PC-9 (cell line): ENCODE measurements at regions of chr7 and their contacts with region 1.

Region 1: DNA sequence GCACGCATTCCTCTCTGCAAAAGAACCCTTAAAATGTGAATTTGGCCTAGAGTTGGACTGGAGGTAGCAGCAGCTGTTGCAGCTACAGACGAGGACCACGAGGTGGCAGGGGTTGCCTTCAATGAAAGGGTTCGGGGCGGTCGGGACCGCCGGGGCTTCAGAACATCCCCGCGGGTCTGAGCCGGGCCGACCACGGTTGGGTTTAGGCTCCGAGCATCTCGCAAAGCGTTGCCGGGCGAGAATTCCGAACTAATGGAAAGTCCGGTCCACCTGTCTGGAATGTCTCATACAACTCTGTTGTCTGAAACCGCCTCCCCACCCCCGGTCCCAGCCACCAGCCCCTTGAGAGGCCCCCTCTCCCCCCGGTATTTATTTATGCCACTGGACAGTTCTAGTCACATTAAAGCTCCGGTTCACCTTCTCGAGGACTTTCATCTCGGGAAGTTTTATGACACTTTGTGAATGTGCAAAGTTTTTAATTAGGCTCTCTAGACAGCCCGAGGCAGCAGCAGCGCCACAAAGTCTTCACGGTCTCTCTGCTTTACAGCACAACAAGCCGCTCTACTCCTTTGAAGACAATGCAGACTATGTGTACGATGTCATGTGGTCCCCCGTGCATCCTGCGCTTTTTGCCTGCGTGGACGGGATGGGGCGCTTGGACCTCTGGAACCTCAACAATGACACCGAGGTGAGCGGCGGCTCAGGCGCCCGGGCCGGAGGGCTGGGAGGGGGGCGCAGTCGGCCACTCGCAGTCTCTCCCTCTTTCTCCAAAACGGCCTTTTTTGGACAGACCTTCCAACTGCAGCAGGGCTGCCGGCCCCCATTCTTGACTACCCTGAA is 246.2 kb downstream of the SLC25A13 start:
- DNase-seq: peak in 1 of 2 experiments; percentile 55
- H3K4me3 ChIP-seq: peak overlapping the region; percentile 73
- H3K27ac ChIP-seq: no peak overlapping the region
- H3K4me1 ChIP-seq: peaks cover 13% of the 10 kb centered on the region
- H3K27me3 ChIP-seq: no peaks in the 10 kb centered on the region
- CTCF ChIP-seq: peak; percentile 87

Region 2: DNA sequence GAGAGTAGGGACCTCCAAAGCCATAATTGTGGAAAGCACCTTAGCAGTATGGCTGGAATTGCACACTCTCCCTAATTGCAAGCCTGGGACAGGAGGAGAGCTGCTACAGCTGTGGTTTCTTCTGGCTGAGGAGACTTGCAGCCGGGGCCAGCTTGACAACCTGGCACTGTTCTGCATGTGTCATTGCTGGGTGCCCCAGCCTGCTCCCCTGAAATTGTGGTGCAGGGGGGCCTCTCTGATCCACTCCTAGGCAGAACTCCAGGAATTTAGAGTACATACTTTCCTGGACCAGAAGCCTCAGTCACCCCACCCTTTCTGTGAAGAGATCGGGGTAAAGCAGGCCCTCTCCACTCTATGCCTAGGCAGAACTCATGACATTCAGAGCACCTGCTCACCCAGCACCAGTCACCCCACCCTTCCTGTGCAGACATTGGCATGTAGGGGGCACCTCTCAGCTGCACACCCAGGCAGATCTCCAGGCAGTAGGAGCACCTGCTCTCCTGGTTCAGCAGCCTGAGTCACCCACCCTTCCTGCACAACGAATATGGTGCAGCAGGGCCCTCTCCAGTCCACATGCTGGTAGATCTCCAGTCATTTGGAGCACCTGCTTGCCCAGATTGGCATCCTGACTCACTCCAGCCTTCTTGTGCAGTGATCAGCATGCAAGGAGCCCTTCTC is 337.8 kb before region 1 on chr7:
- CTCF ChIA-PET with region 1: no interaction called
- POLR2A ChIA-PET with region 1: no interaction called
- intact Hi-C with region 1: no loop called
- DNase-seq: no peak
- H3K4me3 ChIP-seq: no peak overlapping the region
- H3K27ac ChIP-seq: no peak overlapping the region
- H3K4me1 ChIP-seq: no peaks in the 10 kb centered on the region
- H3K27me3 ChIP-seq: peaks cover 3% of the 10 kb centered on the region; the same call in 1 of the 2 replicates
- CTCF ChIP-seq: no peak

Region 3: GRCh38 chr7:95916573-95917297 is 159.0 kb before region 1 on chr7:
- CTCF ChIA-PET with region 1: interaction called, 11 read pairs
- POLR2A ChIA-PET with region 1: no interaction called
- intact Hi-C with region 1: no loop called
- DNase-seq: peak; percentile 43 to 76
- H3K4me3 ChIP-seq: no peak overlapping the region
- H3K27ac ChIP-seq: no peak overlapping the region
- H3K4me1 ChIP-seq: no peaks in the 10 kb centered on the region
- H3K27me3 ChIP-seq: no peaks in the 10 kb centered on the region; the same call in 1 of the 2 replicates
- CTCF ChIP-seq: peak; percentile 92

Region 4: GRCh38 chr7:96169439-96169838 is 93.7 kb after region 1 on chr7:
- CTCF ChIA-PET with region 1: no interaction called
- POLR2A ChIA-PET with region 1: no interaction called
- intact Hi-C with region 1: no loop called
- DNase-seq: no peak
- H3K4me3 ChIP-seq: no peak overlapping the region
- H3K27ac ChIP-seq: no peak overlapping the region
- H3K4me1 ChIP-seq: no peaks in the 10 kb centered on the region
- H3K27me3 ChIP-seq: no peaks in the 10 kb centered on the region
- CTCF ChIP-seq: no peak

Region 5: DNA sequence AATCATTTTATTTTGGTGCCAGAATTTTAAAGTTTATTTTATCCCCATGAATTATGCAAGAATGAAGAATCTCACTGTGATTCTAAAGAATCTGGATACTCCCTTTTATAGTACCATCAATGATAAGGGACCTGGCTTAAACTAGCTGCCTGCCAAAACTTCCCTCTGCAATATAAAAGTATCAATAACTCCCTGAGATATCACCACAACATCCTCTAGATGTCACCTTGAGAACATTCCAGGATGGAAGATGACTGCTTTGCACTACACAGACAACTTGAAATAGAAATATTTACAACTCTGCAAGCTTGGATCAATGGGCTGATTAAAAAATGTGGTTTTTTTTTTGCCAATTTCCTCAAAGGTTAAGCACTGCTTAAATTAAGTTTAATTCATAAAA is 104.1 kb after region 1 on chr7:
- CTCF ChIA-PET with region 1: no interaction called
- POLR2A ChIA-PET with region 1: no interaction called
- intact Hi-C with region 1: loop called (anchors 5 kb)
- DNase-seq: no peak
- H3K4me3 ChIP-seq: no peak overlapping the region
- H3K27ac ChIP-seq: no peak overlapping the region
- H3K4me1 ChIP-seq: peaks cover 10% of the 10 kb centered on the region
- H3K27me3 ChIP-seq: no peaks in the 10 kb centered on the region
- CTCF ChIP-seq: no peak; the same call in 1 of the 2 replicates

Region 6: DNA sequence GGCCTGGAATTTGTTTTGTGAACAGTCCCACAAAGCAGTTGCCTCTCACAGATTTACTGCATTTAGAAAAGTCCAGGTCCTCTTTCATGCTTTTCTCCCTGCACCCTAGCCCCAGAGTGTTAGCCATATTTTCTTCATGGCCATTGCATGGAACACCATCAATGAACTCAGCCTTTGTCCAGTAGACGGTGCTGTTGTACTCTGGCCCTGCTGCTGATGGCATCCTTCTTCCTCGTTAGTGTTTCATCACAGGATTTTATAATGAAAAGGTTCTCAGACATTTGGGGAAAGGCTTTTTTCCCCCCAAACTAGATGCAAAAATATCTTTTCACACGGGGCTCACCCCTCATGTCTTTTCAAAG is 339.2 kb after region 1 on chr7:
- CTCF ChIA-PET with region 1: no interaction called
- POLR2A ChIA-PET with region 1: no interaction called
- intact Hi-C with region 1: loop called (anchors 1 kb)
- DNase-seq: peak in 1 of 2 experiments; percentile 43
- H3K4me3 ChIP-seq: no peak overlapping the region
- H3K27ac ChIP-seq: no peak overlapping the region
- H3K4me1 ChIP-seq: peaks cover 10% of the 10 kb centered on the region
- H3K27me3 ChIP-seq: no peaks in the 10 kb centered on the region
- CTCF ChIP-seq: peak; percentile 85

Region 7: DNA sequence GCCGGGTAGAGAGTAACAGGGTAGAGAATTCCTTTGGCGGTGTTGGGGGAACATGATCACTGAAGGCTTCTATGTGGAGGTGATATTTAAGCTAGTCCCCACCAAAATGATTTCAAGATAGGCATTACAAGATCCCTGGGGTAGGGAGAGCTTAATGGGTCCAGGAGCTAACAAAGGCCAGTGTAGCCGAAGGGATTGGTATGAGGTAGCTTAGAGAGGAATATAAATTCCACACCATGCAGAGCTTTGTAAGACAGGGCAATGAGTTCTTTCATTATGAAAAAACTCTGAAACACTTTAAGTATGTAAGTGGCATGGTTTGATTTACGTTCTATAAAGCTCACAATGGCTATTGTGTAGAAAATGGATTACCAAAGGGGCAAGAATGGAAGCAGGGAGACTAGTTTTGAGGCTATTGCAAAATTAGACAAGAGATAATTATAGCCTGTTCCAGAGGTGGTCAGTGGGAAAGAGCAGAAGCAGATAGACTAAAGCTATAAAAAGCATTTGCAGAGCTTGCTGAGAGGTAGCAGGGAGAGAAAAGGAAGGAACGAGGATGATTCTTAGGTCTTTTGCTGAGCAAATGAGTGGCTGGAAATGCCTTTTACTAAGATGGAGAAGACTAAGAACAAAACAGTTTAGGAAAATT is 365.8 kb after region 1 on chr7:
- CTCF ChIA-PET with region 1: no interaction called
- POLR2A ChIA-PET with region 1: no interaction called
- intact Hi-C with region 1: no loop called
- DNase-seq: no peak
- H3K4me3 ChIP-seq: no peak overlapping the region
- H3K27ac ChIP-seq: no peak overlapping the region
- H3K4me1 ChIP-seq: no peaks in the 10 kb centered on the region
- H3K27me3 ChIP-seq: no peaks in the 10 kb centered on the region
- CTCF ChIP-seq: no peak

Region 8: DNA sequence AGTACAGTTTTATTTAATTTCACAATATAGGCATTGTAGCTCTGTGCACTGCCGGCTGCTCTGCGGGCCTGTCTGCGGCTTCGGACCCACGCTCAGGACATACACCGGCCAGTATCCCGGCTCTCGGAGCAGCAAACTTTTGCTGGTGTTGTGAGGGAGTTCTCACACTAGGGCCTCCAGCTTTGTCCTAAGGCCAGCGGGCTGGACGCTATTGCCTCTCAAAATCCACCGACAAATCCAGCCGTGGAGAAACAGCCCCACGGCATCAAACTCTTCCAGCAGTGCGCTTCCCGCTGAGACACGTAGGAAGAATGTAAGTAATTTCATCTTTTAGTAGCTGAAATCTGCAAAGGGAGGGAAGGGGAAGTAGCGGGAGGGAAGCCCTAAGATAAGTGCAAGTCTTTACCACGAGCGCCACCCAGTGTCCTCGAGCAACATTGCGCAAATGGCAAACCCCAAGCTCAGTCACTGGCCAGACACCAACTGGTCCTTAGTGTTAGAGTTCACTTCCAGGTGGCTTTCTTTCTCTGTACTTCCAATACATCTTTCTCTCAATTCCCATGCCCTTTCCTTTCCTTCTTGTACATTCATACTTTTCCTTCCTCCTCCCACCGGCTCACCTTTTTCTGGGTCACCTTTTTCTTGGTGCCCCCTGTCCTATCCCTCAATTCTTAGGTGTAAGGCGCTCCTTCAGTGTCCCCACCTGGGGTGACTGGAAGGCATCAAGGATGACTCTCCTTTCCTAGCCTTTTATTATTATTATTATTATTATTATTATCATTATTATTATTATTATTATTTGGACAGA is 951.9 kb after region 1 on chr7:
- CTCF ChIA-PET with region 1: no interaction called
- POLR2A ChIA-PET with region 1: no interaction called
- intact Hi-C with region 1: loop called (anchors 1 kb)
- DNase-seq: peak; percentile 51 to 67
- H3K4me3 ChIP-seq: no peak overlapping the region
- H3K27ac ChIP-seq: no peak overlapping the region
- H3K4me1 ChIP-seq: peaks cover 4% of the 10 kb centered on the region; the same call in 1 of the 2 replicates
- H3K27me3 ChIP-seq: no peaks in the 10 kb centered on the region; the same call in 1 of the 2 replicates
- CTCF ChIP-seq: peak; percentile 90